ENCODE measurements at regions of chr10 and their contacts with region 1.

Region 1: DNA sequence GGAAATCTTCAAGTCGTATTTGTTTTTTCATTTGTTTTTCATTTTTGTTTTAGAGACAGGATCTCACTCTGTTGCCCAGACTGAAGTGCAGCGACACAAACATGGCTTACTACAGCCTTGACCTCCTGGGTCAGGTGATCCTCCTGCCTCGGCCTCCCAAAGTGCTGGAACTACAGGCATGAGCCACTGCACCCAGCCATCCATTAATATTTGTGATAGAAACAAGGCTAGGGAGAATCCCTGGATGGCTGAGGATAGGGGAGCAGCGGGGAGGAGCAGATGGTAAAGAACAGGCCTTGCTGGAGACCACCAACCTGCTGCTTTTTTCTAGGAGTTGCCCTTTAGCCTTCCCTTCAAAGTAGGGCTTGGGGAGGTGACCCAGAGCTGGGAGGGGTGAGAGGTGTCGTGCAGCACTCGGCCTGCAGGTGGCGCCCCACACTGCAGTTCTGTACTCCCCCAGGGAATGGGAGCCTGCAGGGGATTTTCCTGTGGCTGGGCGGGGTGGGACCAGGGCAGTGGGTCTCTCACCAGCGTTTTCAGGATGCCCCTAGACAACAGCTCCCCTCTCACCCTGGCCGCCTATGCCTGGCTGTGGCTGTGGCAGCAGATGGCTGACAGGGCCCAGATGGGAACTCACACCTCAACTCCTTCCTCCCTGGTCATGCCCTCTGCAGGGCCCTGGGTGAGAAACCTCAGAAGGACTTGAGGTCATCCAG is 12.6 kb upstream of the CDH23 start:
- DNase-seq: no peak
- H3K4me3 ChIP-seq: no peak overlapping the region
- CTCF ChIP-seq: peak; percentile 97

Region 2: GRCh38 chr10:71293446-71294084 is 90.6 kb before region 1 on chr10:
- CTCF ChIA-PET with region 1: no interaction called
- POLR2A ChIA-PET with region 1: no interaction called
- DNase-seq: no peak
- H3K4me3 ChIP-seq: no peak overlapping the region
- CTCF ChIP-seq: no peak

Region 3: GRCh38 chr10:71371750-71372166 is 12.4 kb before region 1 on chr10:
- CTCF ChIA-PET with region 1: interaction called, 54 read pairs
- POLR2A ChIA-PET with region 1: no interaction called
- DNase-seq: no peak
- H3K4me3 ChIP-seq: no peak overlapping the region
- CTCF ChIP-seq: no peak

Region 4: GRCh38 chr10:71396084-71396720 is 12.1 kb after region 1 on chr10:
- CTCF ChIA-PET with region 1: interaction called, 14 read pairs
- POLR2A ChIA-PET with region 1: no interaction called
- DNase-seq: no peak
- H3K4me3 ChIP-seq: no peak overlapping the region
- CTCF ChIP-seq: no peak

Region 5: GRCh38 chr10:71608819-71609768 is 225.0 kb after region 1 on chr10:
- CTCF ChIA-PET with region 1: interaction called, 23 read pairs
- POLR2A ChIA-PET with region 1: no interaction called
- DNase-seq: no peak
- H3K4me3 ChIP-seq: no peak overlapping the region
- CTCF ChIP-seq: peak; percentile 86

Region 6: DNA sequence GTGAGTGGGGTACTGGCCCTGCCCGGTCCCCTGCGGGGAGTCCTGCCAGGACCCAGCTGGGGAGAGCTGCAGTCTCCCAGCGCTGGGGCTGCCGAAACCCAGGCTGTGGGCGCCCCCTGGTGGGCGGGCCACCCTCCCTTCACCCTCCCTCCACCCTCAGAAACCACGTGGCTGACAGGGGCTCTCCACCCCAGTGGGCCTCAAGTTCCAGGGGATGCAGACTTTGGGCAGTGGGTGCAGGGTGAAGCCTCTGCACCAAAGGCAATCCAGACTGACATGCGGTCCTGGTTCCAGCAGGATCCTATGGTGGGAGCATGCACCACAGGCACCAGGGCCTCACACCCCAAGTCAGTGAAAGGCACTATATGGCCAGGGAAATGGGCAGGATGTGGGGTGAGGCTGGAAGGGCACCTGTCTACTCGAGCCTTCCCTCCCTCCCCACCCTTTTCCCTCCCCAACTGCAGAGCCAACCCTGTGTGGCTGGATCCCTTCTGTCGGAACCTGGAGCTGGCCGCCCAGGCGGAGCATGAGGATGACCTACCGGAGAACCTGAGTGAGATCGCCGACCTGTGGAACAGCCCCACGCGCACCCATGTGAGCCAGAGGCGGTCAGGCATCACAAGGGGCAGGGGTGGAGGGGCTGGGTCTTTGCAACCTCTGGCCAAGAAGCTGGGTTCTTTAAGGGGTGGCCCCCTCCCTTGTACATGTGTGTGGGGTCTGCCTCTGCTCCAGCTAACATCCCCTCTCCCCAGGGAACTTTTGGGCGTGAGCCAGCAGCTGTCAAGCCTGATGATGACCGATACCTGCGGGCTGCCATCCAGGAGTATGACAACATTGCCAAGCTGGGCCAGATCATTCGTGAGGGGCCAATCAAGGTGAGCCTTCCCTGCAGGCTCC is 428.1 kb after region 1 on chr10:
- CTCF ChIA-PET with region 1: interaction called, 12 read pairs
- POLR2A ChIA-PET with region 1: no interaction called
- DNase-seq: no peak
- H3K4me3 ChIP-seq: no peak overlapping the region
- CTCF ChIP-seq: peak; percentile 93